Mucosa of descending colon (tissue), 3 donors: ENCODE measurements at regions of chr10 and their contacts with region 1.

Region 1: GRCh38 chr10:15433850-15434537 is 62.9 kb upstream of the FAM171A1 start:
- DNase-seq: peak in 1 of 3 donors; percentile 65
- ATAC-seq: peak; percentile 70
- H3K4me3 ChIP-seq: no peak overlapping the region
- H3K4me1 ChIP-seq: no peaks in the 10 kb centered on the region
- CTCF ChIP-seq: no peak

Region 2: GRCh38 chr10:15725603-15726002 is 291.6 kb after region 1 on chr10:
- intact Hi-C with region 1: loop called in 1 of 2 experiments (anchors 10 kb)
- DNase-seq: peak in 1 of 3 donors; percentile 45
- ATAC-seq: peak; percentile 70
- H3K4me3 ChIP-seq: no peak overlapping the region
- H3K4me1 ChIP-seq: no peaks in the 10 kb centered on the region
- CTCF ChIP-seq: peak; percentile 16

Region 3: GRCh38 chr10:15824498-15824897 is 390.5 kb after region 1 on chr10:
- intact Hi-C with region 1: loop called in 1 of 2 experiments (anchors 10 kb)
- DNase-seq: no peak
- ATAC-seq: no peak
- H3K4me3 ChIP-seq: no peak overlapping the region
- H3K4me1 ChIP-seq: no peaks in the 10 kb centered on the region
- CTCF ChIP-seq: no peak